Mammary epithelial cell (primary cell): ENCODE measurements at regions of chr6 and their contacts with region 1.

Region 1: DNA sequence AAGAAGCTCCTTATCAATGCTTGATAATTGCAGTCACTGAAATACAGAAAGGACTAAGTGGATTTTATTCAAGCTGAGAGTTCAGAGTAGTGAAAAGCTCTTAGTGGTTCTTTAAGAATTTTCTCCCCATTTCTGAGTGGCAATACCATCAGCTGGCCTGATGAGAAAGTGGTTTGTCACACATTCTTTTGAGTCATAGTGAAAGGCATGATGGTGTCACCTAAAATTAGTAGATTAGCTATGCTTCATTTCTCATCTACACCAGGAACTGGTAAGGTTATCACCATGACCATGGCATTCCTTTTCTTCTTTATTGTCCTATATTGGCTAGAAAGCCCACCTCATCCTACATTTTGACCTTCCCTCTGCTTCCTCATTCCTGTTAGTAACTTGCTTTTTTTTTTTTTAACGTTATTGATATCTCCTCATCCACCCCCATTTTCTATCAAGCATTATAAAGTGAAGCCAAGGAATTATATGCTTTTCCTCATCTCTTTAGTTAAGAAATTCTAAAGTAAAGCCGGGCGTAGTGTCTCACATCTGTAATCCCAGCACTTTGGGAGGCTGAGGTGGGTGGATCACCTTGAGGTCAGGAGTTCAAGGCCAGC is 67.4 kb upstream of the LOC128125822 start:
- DNase-seq: no peak
- H3K4me3 ChIP-seq: no peak overlapping the region
- H3K27ac ChIP-seq: no peak overlapping the region
- H3K4me1 ChIP-seq: peaks cover 4% of the 10 kb centered on the region
- H3K27me3 ChIP-seq: no peaks in the 10 kb centered on the region
- CTCF ChIP-seq: no peak

Region 2: GRCh38 chr6:63352587-63353285 is 152.1 kb before region 1 on chr6:
- CTCF ChIA-PET with region 1: no interaction called
- dilution Hi-C with region 1: no loop called
- in situ Hi-C with region 1: no loop called
- intact Hi-C with region 1: loop called (anchors 10 kb)
- DNase-seq: peak; percentile 22
- H3K4me3 ChIP-seq: no peak overlapping the region
- H3K27ac ChIP-seq: no peak overlapping the region
- H3K4me1 ChIP-seq: peaks cover 10% of the 10 kb centered on the region
- H3K27me3 ChIP-seq: no peaks in the 10 kb centered on the region
- CTCF ChIP-seq: peak; percentile 68 to 76